Endothelial cell of umbilical vein (primary cell): ENCODE measurements at regions of chr10 and their contacts with region 1.

Region 1: DNA sequence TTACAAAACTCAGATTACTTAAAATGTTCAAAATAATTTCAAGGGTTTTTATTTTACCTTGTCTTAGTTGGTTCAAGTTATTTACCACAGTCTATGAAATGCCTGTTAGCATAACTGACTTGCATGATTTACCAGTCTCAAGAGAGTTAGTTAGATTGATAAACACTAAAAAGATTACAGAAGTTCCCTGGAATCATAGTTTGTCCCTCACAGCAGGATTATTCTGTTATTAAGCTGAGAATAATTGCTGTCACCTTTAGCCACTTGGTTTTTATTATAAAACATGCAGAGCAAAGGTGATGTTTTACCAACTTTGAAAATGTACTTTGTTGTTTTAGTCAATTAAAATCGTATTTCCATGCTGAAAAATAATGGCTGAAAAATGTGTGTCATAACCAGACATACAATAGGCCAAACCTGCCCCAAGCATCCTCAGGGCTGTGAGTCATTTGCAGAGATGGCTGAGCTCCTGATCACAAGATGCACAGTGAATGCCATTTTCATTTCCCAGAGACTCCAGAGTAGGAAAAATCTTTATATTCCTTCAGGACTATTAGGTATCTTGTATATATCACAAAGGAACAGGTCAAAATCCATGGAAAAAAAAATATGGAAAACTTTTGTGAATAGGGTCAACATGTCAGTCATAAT is 87.8 kb upstream of the DKK1 start:
- DNase-seq: peak; percentile 15
- H3K4me3 ChIP-seq: no peak overlapping the region
- H3K27ac ChIP-seq: no peak overlapping the region
- H3K4me1 ChIP-seq: peaks cover 6% of the 10 kb centered on the region
- H3K27me3 ChIP-seq: no peaks in the 10 kb centered on the region
- CTCF ChIP-seq: no peak
- POLR2A ChIP-seq: no peak

Region 2: DNA sequence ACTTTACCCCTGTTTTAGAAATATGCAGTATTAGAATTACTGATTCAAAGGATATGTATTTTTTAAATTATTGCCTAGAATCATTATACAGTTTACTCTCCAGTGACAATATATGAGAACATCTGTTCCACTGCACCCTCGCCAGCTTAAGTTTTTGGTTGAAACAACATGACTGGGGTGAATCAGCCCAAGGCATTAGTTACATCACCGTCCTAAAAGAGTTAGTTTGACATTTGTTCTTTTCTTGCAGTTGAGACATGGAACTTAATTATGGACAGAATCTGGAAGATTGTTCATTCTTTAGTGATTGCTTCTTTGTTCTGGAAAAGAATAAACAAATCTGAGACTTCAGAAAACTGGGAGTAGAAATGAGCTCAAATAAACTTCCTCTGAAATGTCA is 79.6 kb before region 1 on chr10:
- CTCF ChIA-PET with region 1: no interaction called
- POLR2A ChIA-PET with region 1: no interaction called
- dilution Hi-C with region 1: no loop called
- intact Hi-C with region 1: no loop called
- DNase-seq: no peak
- H3K4me3 ChIP-seq: no peak overlapping the region
- H3K27ac ChIP-seq: no peak overlapping the region
- H3K4me1 ChIP-seq: no peaks in the 10 kb centered on the region
- H3K27me3 ChIP-seq: no peaks in the 10 kb centered on the region
- CTCF ChIP-seq: no peak
- POLR2A ChIP-seq: no peak

Region 3: GRCh38 chr10:52276982-52277381 is 50.7 kb after region 1 on chr10:
- CTCF ChIA-PET with region 1: no interaction called
- POLR2A ChIA-PET with region 1: no interaction called
- dilution Hi-C with region 1: no loop called
- intact Hi-C with region 1: loop called (anchors 1 kb)
- DNase-seq: no peak
- H3K4me3 ChIP-seq: no peak overlapping the region
- H3K27ac ChIP-seq: no peak overlapping the region
- H3K4me1 ChIP-seq: peaks cover 10% of the 10 kb centered on the region
- H3K27me3 ChIP-seq: no peaks in the 10 kb centered on the region
- CTCF ChIP-seq: no peak
- POLR2A ChIP-seq: no peak

Region 4: GRCh38 chr10:52466464-52466863 is 240.1 kb after region 1 on chr10:
- CTCF ChIA-PET with region 1: no interaction called
- POLR2A ChIA-PET with region 1: no interaction called
- dilution Hi-C with region 1: no loop called
- intact Hi-C with region 1: no loop called
- DNase-seq: no peak
- H3K4me3 ChIP-seq: no peak overlapping the region
- H3K27ac ChIP-seq: no peak overlapping the region
- H3K4me1 ChIP-seq: no peaks in the 10 kb centered on the region
- H3K27me3 ChIP-seq: no peaks in the 10 kb centered on the region
- CTCF ChIP-seq: no peak
- POLR2A ChIP-seq: no peak